Right ventricle myocardium inferior (tissue), 1 donor: ENCODE measurements at regions of chr15 and their contacts with region 1.

Region 1: DNA sequence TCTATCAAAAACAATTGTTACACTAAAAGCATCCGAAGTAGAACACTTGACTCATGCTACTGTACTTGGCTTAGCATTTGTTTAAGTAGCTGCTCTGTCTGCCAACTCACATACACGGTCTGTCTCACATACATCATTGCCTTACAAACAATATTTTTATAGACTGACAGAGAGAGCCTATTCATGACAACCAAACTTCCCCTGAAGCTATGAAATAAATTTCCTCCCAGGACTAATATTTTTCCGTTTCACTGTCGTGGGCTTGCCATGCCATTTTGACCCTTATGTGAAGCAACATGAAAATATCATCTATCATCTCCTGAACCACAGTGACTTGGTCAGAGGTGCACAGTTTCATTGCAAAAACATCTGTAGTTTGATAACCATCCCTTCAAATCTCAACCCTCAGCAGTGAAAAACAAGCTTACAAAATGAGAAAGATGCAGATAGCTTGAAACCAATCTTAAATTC is 66.5 kb upstream of the PYGO1 start:
- DNase-seq: no peak
- ATAC-seq: no peak

Region 2: DNA sequence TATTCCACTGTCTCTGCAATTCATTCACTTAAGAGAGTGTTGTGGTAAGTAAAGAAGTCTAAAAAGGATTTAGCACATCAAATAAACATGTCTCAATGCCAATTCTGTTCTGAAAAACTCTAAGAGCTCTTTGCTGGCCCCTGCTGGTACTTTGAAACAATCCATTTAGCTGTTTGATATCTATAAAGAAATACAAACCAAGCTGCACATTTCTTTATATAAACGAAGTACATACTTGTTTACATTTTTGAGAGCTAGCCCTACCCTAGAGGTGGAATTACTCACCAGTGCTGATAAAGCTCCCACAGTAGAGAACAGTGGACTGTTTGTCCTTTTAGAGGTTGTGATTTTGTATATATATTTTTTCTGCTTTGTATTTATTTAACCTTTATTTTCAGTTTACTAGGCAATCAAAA is 263.3 kb after region 1 on chr15:
- intact Hi-C with region 1: loop called (anchors 5 kb)
- DNase-seq: no peak
- ATAC-seq: no peak